CD14-positive monocyte (primary cell): ENCODE measurements at regions of chr12 and their contacts with region 1.

Region 1: GRCh38 chr12:112382232-112382796 is at the start of gene HECTD4:
- DNase-seq: peak; percentile 81 to 92 (median 83)
- H3K4me3 ChIP-seq: peak within 1 kb of the TSS; percentile 49 to 90 (median 82)
- H3K4me3 Mint-ChIP-seq: peak within 1 kb of the TSS; percentile 98 to 100
- H3K27ac ChIP-seq: peak within 1 kb of the TSS; percentile 14 to 82
- H3K27ac Mint-ChIP-seq: peak within 1 kb of the TSS; percentile 84 to 95 (median 93)
- H3K4me1 ChIP-seq: peaks cover 35 to 40% of the 10 kb centered on the region in 2 donors
- H3K4me1 Mint-ChIP-seq: peaks cover 39% of the 10 kb centered on the region
- H3K27me3 ChIP-seq: no peaks in the 10 kb centered on the region
- H3K27me3 Mint-ChIP-seq: peaks cover 0 to 2% (median 1%) of the 10 kb centered on the region in 3 donors
- CTCF ChIP-seq: no peak
- polyA plus RNA-seq, gene HECTD4: 0.73 to 18.3 (median 2.4) TPM

Region 2: GRCh38 chr12:112125250-112125999 is 256.9 kb before region 1 on chr12 and contains the start of gene TRAFD1:
- intact Hi-C with region 1: loop called in 1 of 2 experiments (anchors 10 kb)
- DNase-seq: peak; percentile 95 to 96 (median 96)
- H3K4me3 ChIP-seq: peak within 1 kb of the TSS; percentile 71 to 99 (median 95)
- H3K4me3 Mint-ChIP-seq: peak within 1 kb of the TSS; percentile 86 to 91
- H3K27ac ChIP-seq: peak within 1 kb of the TSS; percentile 70 to 94
- H3K27ac Mint-ChIP-seq: peak within 1 kb of the TSS; percentile 80 to 92 (median 89)
- H3K4me1 ChIP-seq: peaks cover 47 to 54% of the 10 kb centered on the region in 2 donors
- H3K4me1 Mint-ChIP-seq: peaks cover 46% of the 10 kb centered on the region
- H3K27me3 ChIP-seq: no peaks in the 10 kb centered on the region
- H3K27me3 Mint-ChIP-seq: peaks cover 0 to 6% (median 0%) of the 10 kb centered on the region in 3 donors
- CTCF ChIP-seq: no peak
- polyA plus RNA-seq, gene TRAFD1: 35.2 to 83.6 (median 82.3) TPM